Heart right ventricle (tissue), 16 donors: ENCODE measurements at regions of chr11 and their contacts with region 1.

Region 1: DNA sequence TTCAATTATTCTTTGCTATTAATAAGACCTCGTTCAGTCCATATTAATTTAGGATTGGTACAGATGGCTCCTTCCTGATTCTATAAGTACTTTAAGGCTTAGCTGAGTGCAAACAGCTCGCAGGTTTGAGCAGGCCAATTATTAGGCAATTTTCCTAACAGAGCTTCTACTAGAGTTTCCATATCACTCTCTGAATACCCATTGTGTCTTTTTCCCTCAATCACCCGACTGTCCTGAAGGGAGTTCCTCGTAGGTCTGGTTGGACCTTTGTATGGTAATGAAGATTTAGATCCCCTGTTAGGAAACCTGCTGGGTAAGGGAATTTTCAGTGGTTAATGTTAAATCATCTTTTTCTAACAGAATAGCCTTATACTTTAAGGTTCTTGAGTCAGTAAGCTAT is 61.1 kb downstream of the ARHGAP42 start:
- DNase-seq: no peak
- ATAC-seq: no peak
- H3K4me3 ChIP-seq: no peak overlapping the region
- H3K27ac ChIP-seq: no peak overlapping the region
- H3K4me1 ChIP-seq: peaks cover 0 to 29% (median 4%) of the 10 kb centered on the region in 9 donors
- H3K27me3 ChIP-seq: no peaks in the 10 kb centered on the region
- CTCF ChIP-seq: no peak

Region 2: DNA sequence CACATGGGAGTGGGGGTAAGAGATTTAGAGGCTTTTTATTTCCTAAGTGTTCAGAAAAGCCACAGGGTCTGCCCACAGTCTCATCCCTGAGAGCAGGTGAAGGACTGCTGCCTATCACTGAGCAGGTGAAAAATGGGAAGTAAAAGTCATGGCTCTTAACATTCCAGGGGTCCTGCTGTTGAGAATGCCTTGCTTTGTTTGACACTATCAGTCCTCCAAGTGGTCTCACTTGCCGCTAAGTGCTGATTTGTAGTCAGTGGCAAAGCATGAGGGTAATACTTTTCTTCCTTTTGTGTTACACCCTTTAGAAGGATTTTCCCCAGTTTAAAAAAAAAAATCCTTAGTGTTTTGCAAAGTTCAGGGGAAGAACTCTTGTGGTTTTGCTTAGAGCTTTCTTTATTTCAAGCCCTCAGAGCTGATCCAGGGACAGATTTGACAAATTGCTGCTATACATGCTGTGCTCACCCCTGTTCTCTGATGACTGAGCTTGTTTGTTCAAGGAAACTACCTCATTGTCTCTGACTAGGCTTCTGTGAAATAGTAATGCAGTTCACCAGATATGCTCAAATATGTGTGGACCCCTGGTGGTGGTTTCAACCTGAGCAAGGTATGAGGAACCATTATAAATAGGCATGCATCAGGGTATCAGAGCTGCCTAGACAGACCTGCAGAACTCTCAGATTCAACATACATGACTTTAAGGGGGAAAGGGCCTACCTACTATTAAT is 79.9 kb after region 1 on chr11:
- intact Hi-C with region 1: loop called in 1 of 10 experiments (anchors 5 kb)
- DNase-seq: no peak
- ATAC-seq: no peak
- H3K4me3 ChIP-seq: no peak overlapping the region
- H3K27ac ChIP-seq: no peak overlapping the region
- H3K4me1 ChIP-seq: peaks cover 2 to 43% (median 39%) of the 10 kb centered on the region in 9 donors
- H3K27me3 ChIP-seq: no peaks in the 10 kb centered on the region
- CTCF ChIP-seq: peak in 2 of 9 donors; percentile 14 to 24

Region 3: DNA sequence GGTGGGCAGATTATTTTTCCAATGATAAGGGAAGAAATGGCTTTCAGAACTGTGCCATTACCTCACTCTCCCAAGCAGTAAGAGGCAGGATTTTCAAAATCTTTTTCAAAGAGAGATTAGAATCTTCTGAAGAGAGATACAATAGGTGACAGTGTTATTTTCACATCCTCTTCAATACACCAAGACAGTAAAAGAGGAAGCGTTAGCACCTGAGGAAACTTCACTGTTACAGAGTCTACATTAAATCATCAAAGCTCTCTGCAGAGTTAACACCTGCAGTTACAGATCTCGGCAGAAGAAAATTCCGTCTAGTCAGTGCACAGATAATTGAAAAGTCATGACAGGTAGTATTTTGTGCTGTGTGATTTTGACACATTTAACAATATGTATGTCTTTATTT is 236.5 kb after region 1 on chr11:
- intact Hi-C with region 1: no loop called
- DNase-seq: no peak
- ATAC-seq: no peak
- H3K4me3 ChIP-seq: no peak overlapping the region
- H3K27ac ChIP-seq: no peak overlapping the region
- H3K4me1 ChIP-seq: no peaks in the 10 kb centered on the region
- H3K27me3 ChIP-seq: no peaks in the 10 kb centered on the region
- CTCF ChIP-seq: no peak